ENCODE measurements at regions of chr5 and their contacts with region 1.

Region 1: DNA sequence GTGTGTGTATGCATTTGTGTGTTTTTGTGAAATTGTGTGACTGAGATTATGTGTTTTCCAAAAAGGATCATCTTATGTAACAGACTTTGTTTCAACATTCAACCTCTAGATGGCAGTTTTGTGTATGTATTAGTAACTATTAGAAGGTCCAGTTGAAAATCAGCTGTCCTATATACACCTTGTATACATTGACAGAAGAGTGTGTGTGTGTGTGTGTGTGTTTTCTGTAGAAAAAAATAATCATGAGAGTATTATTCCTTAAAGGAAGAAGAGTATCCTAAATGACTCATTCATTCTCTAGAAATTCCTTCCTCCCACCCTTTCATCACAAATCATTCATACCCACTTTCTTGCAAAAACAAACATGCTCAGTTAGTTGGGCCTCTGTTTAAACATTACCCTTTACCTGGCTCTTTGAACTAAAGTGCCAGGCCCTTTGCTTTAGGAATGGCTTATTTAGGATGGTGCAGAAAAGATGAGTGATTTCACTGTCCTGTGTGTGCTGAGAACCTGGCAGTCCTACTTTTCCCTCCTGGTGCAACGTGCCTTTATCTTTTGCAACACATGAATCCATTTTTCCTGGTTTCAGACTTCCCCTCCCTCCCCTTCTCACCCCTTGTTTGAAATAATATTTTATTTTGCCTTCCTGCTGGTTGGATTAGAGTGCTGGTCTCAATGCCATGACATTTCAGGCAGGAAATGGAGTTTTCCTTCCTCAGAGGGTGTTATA is 152.2 kb downstream of the ARHGAP26 start:
- DNase-seq: peak; percentile 61
- H3K4me3 ChIP-seq: no peak overlapping the region
- H3K27ac ChIP-seq: no peak overlapping the region
- H3K4me1 ChIP-seq: peaks cover 21% of the 10 kb centered on the region
- H3K27me3 ChIP-seq: no peaks in the 10 kb centered on the region
- CTCF ChIP-seq: peak; percentile 63

Region 2: DNA sequence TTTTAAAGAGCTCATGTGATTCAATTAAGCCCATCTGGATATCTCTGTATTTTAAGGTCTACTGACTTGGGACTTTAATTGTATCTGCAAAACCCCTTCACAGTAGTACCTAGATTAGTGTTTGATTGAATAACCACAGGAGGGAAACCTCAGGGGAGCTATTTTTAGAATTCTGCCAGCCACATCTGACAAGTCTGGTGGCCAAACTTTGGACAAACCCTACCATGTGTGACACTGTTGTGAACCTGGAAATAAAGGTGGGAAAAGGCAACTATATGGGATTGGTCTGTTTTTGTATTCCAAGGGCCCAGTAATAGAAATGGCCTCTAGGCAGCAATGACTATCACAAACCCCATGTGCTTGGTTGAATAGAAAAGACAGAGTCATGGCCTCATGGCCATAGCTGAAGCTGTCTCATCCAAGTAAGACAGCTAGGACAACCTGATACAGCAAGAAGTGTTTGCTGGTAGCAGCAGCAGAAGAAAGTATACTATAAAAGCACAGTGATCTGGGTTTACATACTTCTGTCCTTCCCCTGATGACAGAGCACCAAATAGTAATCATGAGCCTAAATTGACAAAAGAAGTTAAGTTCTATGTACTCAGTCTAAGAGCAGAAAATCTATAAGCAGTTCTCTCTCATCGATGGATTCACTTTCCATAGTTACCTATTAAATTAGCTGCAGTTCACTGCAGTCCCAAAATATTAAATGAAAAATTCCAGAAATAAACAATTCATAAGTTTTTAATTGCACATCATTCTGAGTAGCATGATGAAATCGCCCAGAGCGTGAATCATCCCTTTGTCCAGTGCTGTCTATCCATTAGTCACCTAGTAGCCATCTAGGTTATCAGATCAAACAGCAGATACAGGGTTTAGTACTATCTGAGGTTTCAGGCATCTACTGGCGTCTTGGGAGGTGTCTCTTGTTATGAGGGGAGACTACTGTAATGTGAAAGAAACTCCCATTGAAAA is 37.6 kb after region 1 on chr5:
- CTCF ChIA-PET with region 1: no interaction called
- POLR2A ChIA-PET with region 1: no interaction called
- intact Hi-C with region 1: loop called (anchors 2 kb)
- DNase-seq: no peak
- H3K4me3 ChIP-seq: no peak overlapping the region
- H3K27ac ChIP-seq: no peak overlapping the region
- H3K4me1 ChIP-seq: no peaks in the 10 kb centered on the region
- H3K27me3 ChIP-seq: no peaks in the 10 kb centered on the region
- CTCF ChIP-seq: no peak

Region 3: GRCh38 chr5:143056792-143057579 is 134.6 kb after region 1 on chr5:
- CTCF ChIA-PET with region 1: interaction called, 10 read pairs
- POLR2A ChIA-PET with region 1: no interaction called
- intact Hi-C with region 1: no loop called
- DNase-seq: no peak
- H3K4me3 ChIP-seq: no peak overlapping the region
- H3K27ac ChIP-seq: no peak overlapping the region
- H3K4me1 ChIP-seq: peaks cover 46% of the 10 kb centered on the region
- H3K27me3 ChIP-seq: no peaks in the 10 kb centered on the region
- CTCF ChIP-seq: no peak

Region 4: DNA sequence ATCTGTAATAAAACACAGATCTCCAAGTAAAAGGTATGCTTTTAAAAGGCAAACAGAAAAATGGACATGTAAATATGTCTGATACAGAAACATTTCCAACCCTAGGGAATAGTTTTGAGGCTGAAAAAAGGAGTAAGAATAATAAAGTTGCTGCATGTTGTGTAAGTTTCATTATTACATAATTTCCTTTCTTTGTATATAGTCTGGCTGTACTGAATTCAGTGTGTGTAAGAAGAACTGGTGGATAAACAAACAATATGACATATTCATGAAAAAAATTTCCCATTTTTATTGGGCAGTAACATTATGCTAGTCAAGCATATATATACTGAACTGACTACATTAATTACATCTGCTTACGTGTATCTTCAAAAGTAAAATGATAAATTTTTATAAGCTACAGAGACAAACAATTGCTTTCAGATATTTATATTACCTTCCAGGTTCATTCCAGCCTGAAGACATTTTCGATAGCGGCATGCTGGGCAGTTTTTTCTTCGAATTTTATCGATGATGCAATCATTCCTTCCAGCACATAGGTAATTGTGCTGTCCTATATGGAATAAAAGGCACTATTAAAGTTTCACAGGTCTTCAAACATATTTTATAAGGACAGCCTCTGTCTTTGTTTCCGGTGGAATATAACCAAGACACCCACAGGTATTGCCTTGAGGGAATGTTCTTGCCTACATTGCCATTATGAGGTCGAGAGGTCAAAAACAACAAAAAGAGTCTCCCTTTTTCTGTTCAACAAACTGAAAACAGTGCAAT is 387.5 kb after region 1 on chr5:
- CTCF ChIA-PET with region 1: no interaction called
- POLR2A ChIA-PET with region 1: no interaction called
- intact Hi-C with region 1: no loop called
- DNase-seq: no peak
- H3K4me3 ChIP-seq: no peak overlapping the region
- H3K27ac ChIP-seq: no peak overlapping the region
- H3K4me1 ChIP-seq: no peaks in the 10 kb centered on the region
- H3K27me3 ChIP-seq: no peaks in the 10 kb centered on the region
- CTCF ChIP-seq: no peak

Region 5: DNA sequence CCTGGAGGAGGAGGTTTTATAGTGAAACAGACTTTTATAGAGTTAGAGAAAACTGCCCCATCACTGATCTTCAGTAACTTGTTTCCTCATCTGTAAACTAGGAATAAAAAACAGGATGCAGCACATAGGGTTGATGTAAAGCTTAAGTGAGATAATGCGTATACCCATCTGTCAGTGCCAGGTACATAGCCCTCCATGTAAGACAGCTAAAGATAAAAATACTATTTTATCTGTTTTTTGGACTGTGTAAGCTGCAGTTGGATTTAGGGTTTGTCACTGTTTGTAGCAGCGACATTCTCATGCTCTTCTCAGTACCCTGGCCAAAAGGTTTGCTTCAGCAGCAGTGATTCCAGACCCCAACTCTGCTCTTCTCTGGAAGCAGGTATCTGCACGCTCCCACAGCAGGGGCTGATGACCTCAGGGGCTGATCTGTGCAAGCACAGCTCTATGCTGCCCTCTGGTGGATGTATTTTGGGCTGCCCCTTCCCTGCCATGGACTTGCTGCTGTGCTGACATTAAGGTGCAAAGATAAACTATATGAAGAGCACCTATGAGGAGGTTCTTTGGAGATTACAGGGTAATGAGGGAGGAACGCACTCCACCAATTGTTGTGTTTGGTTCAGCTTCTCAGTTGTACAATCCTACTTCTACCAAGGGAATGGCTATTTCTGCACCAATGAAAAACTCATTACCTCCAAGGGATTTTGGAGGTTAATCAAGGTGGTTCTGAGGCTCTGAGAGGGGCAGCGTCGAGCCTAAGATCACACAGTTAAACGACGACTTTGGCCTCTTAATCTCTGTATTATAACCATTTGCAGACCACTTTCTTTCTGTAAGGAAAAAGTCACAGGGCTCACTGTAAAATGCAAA is 902.7 kb after region 1 on chr5:
- CTCF ChIA-PET with region 1: no interaction called
- POLR2A ChIA-PET with region 1: no interaction called
- intact Hi-C with region 1: loop called (anchors 2 kb)
- DNase-seq: peak; percentile 76
- H3K4me3 ChIP-seq: no peak overlapping the region
- H3K27ac ChIP-seq: no peak overlapping the region
- H3K4me1 ChIP-seq: no peaks in the 10 kb centered on the region
- H3K27me3 ChIP-seq: no peaks in the 10 kb centered on the region
- CTCF ChIP-seq: peak; percentile 95

Region 6: GRCh38 chr5:143968011-143968878 is 1045.9 kb after region 1 on chr5:
- CTCF ChIA-PET with region 1: no interaction called
- POLR2A ChIA-PET with region 1: no interaction called
- intact Hi-C with region 1: loop called (anchors 10 kb)
- DNase-seq: peak; percentile 62
- H3K4me3 ChIP-seq: no peak overlapping the region
- H3K27ac ChIP-seq: no peak overlapping the region
- H3K4me1 ChIP-seq: no peaks in the 10 kb centered on the region
- H3K27me3 ChIP-seq: peaks cover 36% of the 10 kb centered on the region
- CTCF ChIP-seq: peak; percentile 69